ENCODE measurements at regions of chr17 and their contacts with region 1.

Region 1: GRCh38 chr17:45135192-45135977 is at the start of gene ACBD4:
- DNase-seq: peak; percentile 95
- CTCF ChIP-seq: peak; percentile 100

Region 2: DNA sequence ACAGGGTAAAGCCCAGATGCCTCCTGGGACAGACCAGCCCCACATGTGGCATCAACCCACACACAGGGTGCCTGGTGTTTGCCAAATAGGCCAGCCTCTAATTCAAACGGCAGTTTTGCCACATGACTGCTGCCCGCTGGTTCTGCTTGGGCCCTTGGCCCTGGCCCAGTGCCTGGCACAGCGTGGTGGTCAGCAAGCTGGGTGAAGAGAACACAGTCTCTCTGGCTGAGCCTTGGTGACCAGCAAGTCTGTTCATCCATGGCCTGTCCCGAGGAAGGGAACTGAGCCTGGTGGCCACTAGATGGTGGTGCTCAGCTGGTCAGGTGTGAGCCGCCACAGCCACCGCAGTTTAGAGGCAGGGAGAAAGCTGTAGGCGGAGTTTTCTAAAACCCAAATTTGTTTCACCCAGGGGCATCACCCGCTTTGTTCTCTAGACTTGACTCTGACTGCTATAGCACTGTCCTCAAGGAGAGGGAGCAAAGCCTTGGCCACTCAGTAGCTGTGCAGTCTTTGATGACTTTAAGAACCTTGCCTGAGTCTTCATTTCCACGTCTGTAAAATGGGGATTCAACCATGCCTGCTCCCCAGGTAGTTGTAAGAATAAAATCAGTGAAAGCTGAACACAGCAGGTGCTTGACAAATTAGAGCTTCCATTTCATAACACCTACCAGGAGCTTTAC is 215.4 kb before region 1 on chr17:
- CTCF ChIA-PET with region 1: interaction called, 25 read pairs
- POLR2A ChIA-PET with region 1: no interaction called
- DNase-seq: peak; percentile 90
- CTCF ChIP-seq: peak; percentile 92

Region 3: DNA sequence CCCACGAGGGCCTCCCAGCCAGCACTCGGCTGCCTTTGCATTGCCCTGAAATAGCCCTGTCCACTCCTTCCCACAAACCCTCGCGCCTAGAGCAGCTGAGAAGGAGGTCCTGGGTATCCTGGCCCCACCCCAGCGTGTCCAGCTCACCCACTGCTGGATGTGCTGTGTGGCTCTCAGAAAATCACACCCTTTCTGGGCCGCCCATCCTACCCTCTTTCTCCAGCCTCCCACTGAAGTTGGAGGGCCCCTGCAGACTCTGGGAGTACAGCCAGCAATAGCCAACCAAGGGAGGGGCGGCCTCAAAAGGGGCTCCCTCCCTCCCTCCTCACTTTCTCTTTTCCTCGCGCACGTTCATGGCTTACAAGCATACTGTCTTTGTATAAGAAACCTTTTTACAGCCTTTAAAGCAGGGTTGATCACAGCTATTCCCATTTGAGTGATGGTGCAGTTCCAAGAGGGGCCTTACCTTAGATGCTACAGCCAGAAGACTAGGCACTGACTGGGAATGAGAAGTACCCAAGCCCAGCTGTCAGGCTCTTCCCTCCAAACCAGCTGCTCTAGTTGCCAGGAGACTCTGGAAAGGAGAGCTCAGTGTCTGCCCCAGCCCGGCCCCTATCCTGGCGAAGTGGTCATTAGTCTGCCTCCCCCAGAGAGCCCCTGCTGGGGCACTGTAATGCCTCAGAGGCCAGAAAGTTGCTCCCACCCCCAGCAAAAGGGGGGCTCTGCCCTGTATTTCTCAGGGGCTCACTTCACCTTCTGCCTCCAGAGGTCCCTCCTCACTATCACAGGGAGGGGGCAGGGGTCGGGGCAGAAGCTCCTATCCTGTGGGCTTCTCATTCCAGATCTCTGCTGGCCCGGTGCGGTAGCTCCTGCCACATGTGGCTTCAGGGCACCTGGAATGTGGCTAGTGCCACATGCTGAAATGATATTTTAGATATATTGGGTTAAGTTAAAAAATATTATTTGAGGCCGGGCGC is 122.1 kb before region 1 on chr17:
- CTCF ChIA-PET with region 1: no interaction called
- POLR2A ChIA-PET with region 1: no interaction called
- DNase-seq: no peak
- CTCF ChIP-seq: no peak

Region 4: GRCh38 chr17:45098869-45099616 is 36.3 kb before region 1 on chr17:
- CTCF ChIA-PET with region 1: interaction called, 18 read pairs
- POLR2A ChIA-PET with region 1: no interaction called
- DNase-seq: peak; percentile 89
- CTCF ChIP-seq: peak; percentile 75

Region 5: DNA sequence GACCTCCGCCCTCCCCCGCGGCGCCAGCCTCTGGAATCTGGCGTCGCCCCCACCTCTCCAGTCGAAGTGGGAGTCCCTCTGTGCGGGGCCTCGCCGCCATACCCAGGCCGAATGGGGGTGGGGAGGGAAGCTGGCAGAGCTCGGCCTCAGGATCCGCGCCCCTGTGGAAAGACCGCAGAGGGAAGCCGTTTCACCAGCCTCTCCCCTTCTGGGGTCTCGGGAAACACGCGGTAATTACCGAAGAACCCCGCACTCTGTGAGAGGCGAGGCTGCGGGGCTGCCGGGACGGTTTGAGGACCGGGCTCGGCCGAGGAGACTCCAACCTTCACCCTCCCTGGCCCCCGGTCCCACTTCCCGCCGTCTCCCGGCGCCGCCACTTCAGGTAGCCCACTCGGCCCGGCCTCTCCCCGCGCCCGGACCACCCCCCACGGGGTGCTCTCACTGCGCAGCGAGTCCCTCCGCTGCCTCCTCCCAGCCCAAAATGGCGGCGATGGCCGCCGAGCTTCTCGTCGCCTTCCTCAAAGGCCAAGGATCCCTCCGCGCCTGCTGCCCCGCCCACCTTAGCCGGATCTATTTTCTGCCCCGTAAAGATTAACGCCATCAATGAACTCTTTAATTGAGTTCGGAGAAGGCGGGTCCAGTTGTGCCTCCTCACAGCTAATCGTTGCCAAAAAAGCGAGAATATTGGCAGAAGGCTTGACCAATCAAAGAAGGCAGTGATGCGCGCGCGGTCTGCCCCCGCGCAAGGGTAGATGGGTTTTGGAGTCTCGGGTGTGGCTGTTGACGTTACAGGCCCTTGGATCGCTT is 25.8 kb after region 1 on chr17:
- CTCF ChIA-PET with region 1: interaction called, 56 read pairs
- POLR2A ChIA-PET with region 1: interaction called, 4 read pairs
- DNase-seq: peak; percentile 97
- CTCF ChIP-seq: peak; percentile 23

Region 6: GRCh38 chr17:45197555-45198334 is 62.4 kb after region 1 on chr17:
- CTCF ChIA-PET with region 1: interaction called, 316 read pairs
- POLR2A ChIA-PET with region 1: no interaction called
- DNase-seq: peak; percentile 92
- CTCF ChIP-seq: peak; percentile 94

Region 7: GRCh38 chr17:45235416-45236281 is 100.3 kb after region 1 on chr17:
- CTCF ChIA-PET with region 1: interaction called, 56 read pairs
- POLR2A ChIA-PET with region 1: no interaction called
- DNase-seq: peak; percentile 76
- CTCF ChIP-seq: peak; percentile 72

Measured in GM10248 (cell line).